H1 (cell line): ENCODE measurements at regions of chr11 and their contacts with region 1.

Region 1: DNA sequence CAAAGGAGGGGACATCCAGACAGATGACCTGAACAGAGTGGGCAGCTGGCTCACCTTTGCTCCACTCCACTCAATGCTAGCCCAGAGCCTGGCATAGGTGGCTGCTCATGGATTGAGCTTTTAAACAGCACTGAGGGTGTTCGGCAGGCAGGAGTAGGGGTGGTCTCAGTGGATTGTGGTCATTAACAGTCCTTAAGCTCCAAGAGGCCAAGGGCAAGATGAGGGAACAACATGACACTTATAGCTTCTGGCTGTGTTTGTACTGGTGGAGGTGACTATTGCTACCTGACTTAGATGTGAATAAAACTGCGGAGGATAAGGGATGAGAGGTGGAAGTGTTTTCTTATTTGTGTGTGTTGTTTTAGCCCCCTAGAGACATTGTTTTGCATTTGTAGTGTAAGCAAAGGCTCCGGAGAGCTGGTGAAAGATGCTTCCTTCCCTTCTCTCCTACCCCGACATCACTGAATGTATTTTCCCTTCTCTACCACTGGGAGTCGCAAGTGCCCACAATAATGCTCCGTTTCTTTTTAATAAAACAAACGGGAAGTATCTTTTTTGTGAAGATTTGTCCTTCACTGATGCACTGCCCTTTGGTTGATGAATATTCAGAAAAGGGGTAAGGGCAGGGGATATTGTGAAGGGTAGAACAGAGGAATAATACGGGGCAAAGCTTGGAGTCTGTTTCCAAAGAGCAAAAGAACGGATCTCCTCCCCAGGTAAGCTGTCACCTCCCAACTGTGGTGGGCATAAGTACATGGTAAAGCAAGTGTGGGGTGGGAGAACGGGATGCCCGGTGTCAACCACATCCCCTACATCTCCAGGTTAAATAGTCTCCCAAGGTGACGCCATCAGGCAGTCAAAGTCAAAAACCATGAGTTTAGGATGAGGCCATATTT is 27.5 kb upstream of the MTNR1B start:
- DNase-seq: no peak
- H3K4me3 ChIP-seq: no peak overlapping the region
- H3K27ac ChIP-seq: no peak overlapping the region
- H3K4me1 ChIP-seq: peaks cover 0 to 5% (median under 1%) of the 10 kb centered on the region in 4 experiments; a peak in 2 of 7 replicates
- H3K27me3 ChIP-seq: no peaks in the 10 kb centered on the region; a peak in 1 of 7 replicates
- CTCF ChIP-seq: peak; percentile 2 to 72 (median 64)
- EP300 ChIP-seq: no peak
- POLR2A ChIP-seq: no peak
- RAD21 ChIP-seq: peak; percentile 85 to 87

Region 2: GRCh38 chr11:92955860-92956259 is 13.9 kb after region 1 on chr11:
- CTCF ChIA-PET with region 1: interaction called, 31 read pairs
- POLR2A ChIA-PET with region 1: no interaction called
- DNase-seq: no peak
- H3K4me3 ChIP-seq: no peak overlapping the region
- H3K27ac ChIP-seq: no peak overlapping the region
- H3K4me1 ChIP-seq: no peaks in the 10 kb centered on the region; a peak in 2 of 7 replicates
- H3K27me3 ChIP-seq: no peaks in the 10 kb centered on the region
- CTCF ChIP-seq: no peak
- EP300 ChIP-seq: no peak
- POLR2A ChIP-seq: no peak
- RAD21 ChIP-seq: no peak

Region 3: GRCh38 chr11:92969634-92970347 is 27.9 kb after region 1 on chr11 and contains the start of gene MTNR1B:
- CTCF ChIA-PET with region 1: interaction called, 39 read pairs
- POLR2A ChIA-PET with region 1: no interaction called
- DNase-seq: peak in 1 of 2 experiments; percentile 62
- H3K4me3 ChIP-seq: peak within 1 kb of the TSS; percentile 35 to 72 (median 63)
- H3K27ac ChIP-seq: no peak within 1 kb of the TSS
- H3K4me1 ChIP-seq: peaks cover 0 to 2% (median 0%) of the 10 kb centered on the region in 4 experiments; a peak in 2 of 7 replicates
- H3K27me3 ChIP-seq: peaks cover 12 to 25% (median 18%) of the 10 kb centered on the region in 4 experiments
- CTCF ChIP-seq: no peak
- EP300 ChIP-seq: no peak
- POLR2A ChIP-seq: peak in 1 of 2 experiments; percentile 38; a peak in 1 of 3 replicates
- RAD21 ChIP-seq: no peak
- total RNA-seq, gene MTNR1B: not detected in 2 replicates

Region 4: DNA sequence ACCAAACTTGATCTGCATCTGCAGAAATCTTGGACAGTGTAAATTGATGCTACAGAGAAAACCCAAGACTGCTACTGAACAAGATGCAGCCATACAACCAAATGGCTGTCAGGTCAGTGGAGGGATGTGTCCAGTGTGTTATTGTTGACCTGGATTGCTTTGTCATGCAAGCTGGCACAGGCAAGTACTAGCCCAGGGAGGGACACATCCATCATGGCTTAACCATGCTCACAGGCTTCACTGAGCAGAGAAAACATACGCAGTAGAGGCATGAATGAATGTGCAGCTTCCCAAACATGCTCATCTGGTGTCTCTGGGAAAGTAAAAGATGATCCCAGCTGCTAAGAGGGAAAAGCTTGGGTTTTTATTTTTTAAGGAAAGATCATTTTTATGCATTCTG is 121.2 kb after region 1 on chr11:
- CTCF ChIA-PET with region 1: interaction called, 39 read pairs
- POLR2A ChIA-PET with region 1: no interaction called
- DNase-seq: no peak
- H3K4me3 ChIP-seq: no peak overlapping the region
- H3K27ac ChIP-seq: no peak overlapping the region
- H3K4me1 ChIP-seq: peaks cover 0 to 4% (median 0%) of the 10 kb centered on the region in 4 experiments; a peak in 2 of 7 replicates
- H3K27me3 ChIP-seq: no peaks in the 10 kb centered on the region; a peak in 1 of 7 replicates
- CTCF ChIP-seq: no peak
- EP300 ChIP-seq: no peak
- POLR2A ChIP-seq: no peak
- RAD21 ChIP-seq: no peak

Region 5: GRCh38 chr11:93131709-93132108 is 189.8 kb after region 1 on chr11:
- CTCF ChIA-PET with region 1: interaction called, 25 read pairs
- POLR2A ChIA-PET with region 1: no interaction called
- DNase-seq: no peak
- H3K4me3 ChIP-seq: no peak overlapping the region
- H3K27ac ChIP-seq: no peak overlapping the region
- H3K4me1 ChIP-seq: no peaks in the 10 kb centered on the region
- H3K27me3 ChIP-seq: no peaks in the 10 kb centered on the region
- CTCF ChIP-seq: peak in 2 of 3 experiments; percentile 70; a peak in 3 of 4 replicates
- EP300 ChIP-seq: no peak
- POLR2A ChIP-seq: no peak
- RAD21 ChIP-seq: peak; percentile 88 to 90

Region 6: GRCh38 chr11:93197380-93198214 is 255.7 kb after region 1 on chr11 and contains the start of gene SLC36A4:
- CTCF ChIA-PET with region 1: no interaction called
- POLR2A ChIA-PET with region 1: no interaction called
- DNase-seq: peak; percentile 79 to 95
- H3K4me3 ChIP-seq: peak within 1 kb of the TSS; percentile 67 to 99 (median 77)
- H3K27ac ChIP-seq: peak within 1 kb of the TSS; percentile 93
- H3K4me1 ChIP-seq: peaks cover 0 to 3% (median 1%) of the 10 kb centered on the region in 4 experiments; a peak in 2 of 7 replicates
- H3K27me3 ChIP-seq: no peaks in the 10 kb centered on the region
- CTCF ChIP-seq: no peak
- EP300 ChIP-seq: no peak
- POLR2A ChIP-seq: peak; percentile 91 to 92
- RAD21 ChIP-seq: no peak; a peak in 1 of 4 replicates
- total RNA-seq, gene SLC36A4: 22.7 and 24.4 TPM in 2 replicates

Region 7: GRCh38 chr11:93225662-93226061 is 283.7 kb after region 1 on chr11:
- CTCF ChIA-PET with region 1: interaction called, 16 read pairs
- POLR2A ChIA-PET with region 1: no interaction called
- DNase-seq: no peak
- H3K4me3 ChIP-seq: no peak overlapping the region
- H3K27ac ChIP-seq: no peak overlapping the region
- H3K4me1 ChIP-seq: no peaks in the 10 kb centered on the region
- H3K27me3 ChIP-seq: no peaks in the 10 kb centered on the region
- CTCF ChIP-seq: no peak; a peak in 1 of 4 replicates
- EP300 ChIP-seq: no peak
- POLR2A ChIP-seq: no peak
- RAD21 ChIP-seq: peak; percentile 40 to 42